Activated T-helper 1 cell treated with anti-CD3 and anti-CD28 coated beads, Interleukin-12 subunit alpha, Interleukin-12 subunit beta, Interleukin-2, Interleukin-4 antibody, amounts not matched to agents 30 ng/mL and 10 ng/mL and 1 ng/mL, durations not matched to agents 14 hours and 24 hours and 36 hours (primary cell): ENCODE measurements at regions of chrX and their contacts with region 1.

Region 1: DNA sequence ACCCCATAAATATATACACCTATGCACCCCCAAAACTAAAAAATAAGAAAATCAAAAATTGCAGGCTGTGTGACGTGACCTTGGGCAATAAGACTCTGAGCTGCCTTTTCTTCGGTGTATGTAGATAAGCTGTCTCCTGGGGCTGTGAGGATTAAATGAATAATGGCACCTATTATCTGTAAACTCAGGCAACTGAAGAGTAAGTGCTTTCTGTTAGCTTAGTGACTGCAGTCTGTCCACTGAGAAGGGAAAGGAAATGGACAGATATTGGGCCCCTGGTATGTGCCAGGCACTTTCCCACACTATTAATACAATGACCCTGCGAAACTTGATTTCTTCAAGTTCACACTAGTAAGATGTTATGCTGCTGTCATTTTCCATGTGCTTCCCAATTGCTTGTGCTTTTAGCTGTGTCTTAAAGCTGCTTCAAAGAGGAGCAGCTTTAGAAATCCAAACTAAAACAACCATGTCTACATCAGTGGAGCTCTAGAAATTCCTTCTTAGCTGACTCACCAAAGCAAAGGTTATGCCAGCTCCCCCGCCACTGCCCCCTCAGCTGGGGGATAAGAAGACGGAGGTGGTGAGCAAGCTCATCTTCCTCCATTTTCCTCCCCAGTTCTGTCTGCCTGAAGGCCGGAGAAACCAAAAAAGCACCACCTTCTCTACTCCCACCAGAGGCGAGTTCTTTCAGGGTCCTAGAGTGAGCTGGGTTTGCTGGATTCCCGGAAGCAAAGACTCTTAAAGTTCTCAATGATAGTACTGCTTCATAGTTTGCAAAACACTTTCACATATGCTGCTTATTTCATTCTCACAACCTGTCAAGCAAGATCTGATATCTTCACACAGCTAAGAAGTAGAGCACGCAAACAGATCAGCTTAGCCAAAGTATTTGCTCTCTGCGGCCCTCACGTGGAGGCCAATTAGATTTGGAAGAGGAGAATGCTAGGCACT is 8.8 kb upstream of the DGAT2L6 start:
- DNase-seq: no peak
- H3K4me3 Mint-ChIP-seq: no peak overlapping the region
- H3K27ac Mint-ChIP-seq: no peak overlapping the region
- H3K4me1 Mint-ChIP-seq: peaks cover 12% of the 10 kb centered on the region
- H3K27me3 Mint-ChIP-seq: peaks cover 8% of the 10 kb centered on the region

Region 2: GRCh38 chrX:70124678-70125077 is 43.8 kb before region 1 on chrX:
- intact Hi-C with region 1: no loop called
- DNase-seq: no peak
- H3K4me3 Mint-ChIP-seq: no peak overlapping the region
- H3K27ac Mint-ChIP-seq: no peak overlapping the region
- H3K4me1 Mint-ChIP-seq: no peaks in the 10 kb centered on the region
- H3K27me3 Mint-ChIP-seq: peaks cover 2% of the 10 kb centered on the region

Region 3: GRCh38 chrX:70664726-70665125 is 496.2 kb after region 1 on chrX:
- intact Hi-C with region 1: loop called (anchors 10 kb)
- DNase-seq: no peak
- H3K4me3 Mint-ChIP-seq: no peak overlapping the region
- H3K27ac Mint-ChIP-seq: no peak overlapping the region
- H3K4me1 Mint-ChIP-seq: no peaks in the 10 kb centered on the region
- H3K27me3 Mint-ChIP-seq: peaks cover 4% of the 10 kb centered on the region